ENCODE measurements at regions of chr1 and their contacts with region 1.

Region 1: GRCh38 chr1:175138579-175138978 is 54.0 kb downstream of the KIAA0040 start:
- DNase-seq: no peak
- H3K4me3 Mint-ChIP-seq: no peak overlapping the region
- H3K27ac Mint-ChIP-seq: no peak overlapping the region
- H3K4me1 Mint-ChIP-seq: no peaks in the 10 kb centered on the region
- H3K27me3 Mint-ChIP-seq: peaks cover 87% of the 10 kb centered on the region
- CTCF ChIP-seq: no peak

Region 2: GRCh38 chr1:175089136-175089718 is 49.4 kb before region 1 on chr1:
- CTCF ChIA-PET with region 1: no interaction called
- intact Hi-C with region 1: no loop called
- DNase-seq: no peak
- H3K4me3 Mint-ChIP-seq: no peak overlapping the region
- H3K27ac Mint-ChIP-seq: no peak overlapping the region
- H3K4me1 Mint-ChIP-seq: no peaks in the 10 kb centered on the region
- H3K27me3 Mint-ChIP-seq: peaks cover 59% of the 10 kb centered on the region
- CTCF ChIP-seq: no peak

Region 3: DNA sequence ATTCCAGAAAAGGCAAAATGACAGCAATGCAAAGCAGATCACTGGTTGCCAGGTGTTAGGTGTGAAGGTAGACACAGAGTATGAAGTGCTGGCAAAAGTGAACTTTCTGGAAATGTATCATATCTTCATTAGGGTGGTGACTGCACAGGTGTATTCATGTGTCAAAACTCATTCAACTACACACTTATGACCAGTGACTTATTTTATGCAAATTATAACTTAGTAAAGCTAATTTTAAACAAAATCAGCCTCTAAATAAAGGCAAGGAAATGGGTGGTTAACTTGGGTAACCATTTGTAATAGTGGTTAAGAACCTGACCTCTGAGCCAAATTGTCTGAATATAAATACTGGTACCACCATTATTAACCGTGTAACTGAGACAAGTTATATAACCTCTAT is 1061.1 kb after region 1 on chr1:
- CTCF ChIA-PET with region 1: interaction called, 11 read pairs
- intact Hi-C with region 1: no loop called
- DNase-seq: no peak
- H3K4me3 Mint-ChIP-seq: no peak overlapping the region
- H3K27ac Mint-ChIP-seq: no peak overlapping the region
- H3K4me1 Mint-ChIP-seq: peaks cover 37% of the 10 kb centered on the region
- H3K27me3 Mint-ChIP-seq: no peaks in the 10 kb centered on the region
- CTCF ChIP-seq: no peak

Measured in Calu3 (cell line).